ENCODE measurements at regions of chr13 and their contacts with region 1.

Region 1: DNA sequence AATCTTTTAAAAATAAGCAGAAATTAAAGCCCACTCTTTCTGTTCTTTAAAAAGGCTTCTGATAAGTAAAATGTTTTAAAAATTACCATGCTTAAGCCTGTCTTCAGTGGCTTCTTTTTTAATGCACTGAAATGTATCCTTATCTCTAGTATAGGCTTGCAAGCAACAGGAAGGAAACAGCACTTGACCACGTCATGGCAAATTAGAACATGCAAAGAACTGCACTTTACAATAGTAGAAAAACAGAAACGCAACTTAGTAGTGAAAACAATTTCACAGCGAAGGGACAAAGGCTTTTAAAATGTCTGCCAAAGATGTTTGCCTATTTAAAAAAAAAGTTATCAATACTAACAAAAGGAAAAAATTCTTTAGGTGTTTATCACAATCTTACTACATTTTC is 36.3 kb downstream of the ELF1 start:
- DNase-seq: peak in 7 of 9 experiments; percentile 35 to 92 (median 59)
- ATAC-seq: peak; percentile 61
- H3K4me3 ChIP-seq: peak overlapping the region; percentile 36 to 52
- H3K4me3 Mint-ChIP-seq: peak overlapping the region; percentile 95
- H3K27ac ChIP-seq: peak overlapping the region; percentile 76 to 89
- H3K27ac Mint-ChIP-seq: peak overlapping the region; percentile 92
- H3K4me1 ChIP-seq: peaks cover 45% of the 10 kb centered on the region
- H3K4me1 Mint-ChIP-seq: peaks cover 61% of the 10 kb centered on the region
- H3K27me3 ChIP-seq: no peaks in the 10 kb centered on the region
- H3K27me3 Mint-ChIP-seq: no peaks in the 10 kb centered on the region
- CTCF ChIP-seq: no peak

Region 2: GRCh38 chr13:39976481-39976880 is 1006.3 kb before region 1 on chr13:
- CTCF ChIA-PET with region 1: no interaction called
- POLR2A ChIA-PET with region 1: no interaction called
- intact Hi-C with region 1: no loop called
- DNase-seq: no peak
- ATAC-seq: no peak
- H3K4me3 ChIP-seq: no peak overlapping the region
- H3K4me3 Mint-ChIP-seq: no peak overlapping the region
- H3K27ac ChIP-seq: no peak overlapping the region
- H3K27ac Mint-ChIP-seq: no peak overlapping the region
- H3K4me1 ChIP-seq: no peaks in the 10 kb centered on the region
- H3K4me1 Mint-ChIP-seq: no peaks in the 10 kb centered on the region
- H3K27me3 ChIP-seq: no peaks in the 10 kb centered on the region
- H3K27me3 Mint-ChIP-seq: no peaks in the 10 kb centered on the region
- CTCF ChIP-seq: no peak

Region 3: DNA sequence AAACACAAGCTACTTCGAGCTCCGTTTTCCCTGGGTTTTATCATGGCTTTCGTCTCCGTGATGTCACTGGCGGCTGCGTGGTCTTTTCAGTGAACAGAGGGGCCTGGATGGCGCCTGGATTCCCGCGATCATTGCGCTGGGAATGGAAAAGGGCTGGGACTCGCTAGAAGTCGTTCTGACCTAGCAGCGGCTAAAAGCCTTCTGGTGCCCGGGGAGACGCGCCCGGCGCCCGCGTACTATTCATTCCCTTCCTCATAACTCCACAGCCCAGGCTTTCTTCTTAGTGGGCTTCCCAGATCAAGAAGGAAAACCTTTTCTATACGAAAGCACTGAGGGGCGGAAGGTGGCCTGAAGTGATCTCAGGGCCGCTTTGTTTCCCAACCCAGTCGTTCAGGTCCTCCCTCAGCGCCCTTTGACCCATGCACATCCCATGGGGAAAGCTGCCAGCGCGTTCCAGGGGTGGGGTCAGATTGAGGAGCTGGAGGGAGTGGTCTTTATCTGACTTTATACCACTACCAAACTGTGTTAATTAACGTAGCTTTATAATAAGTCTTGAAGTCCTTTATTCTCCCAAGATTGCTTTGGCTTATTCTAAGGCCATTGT is 60.2 kb before region 1 on chr13:
- CTCF ChIA-PET with region 1: no interaction called
- POLR2A ChIA-PET with region 1: interaction called, 4 read pairs
- intact Hi-C with region 1: loop called (anchors 2 to 5 kb)
- DNase-seq: peak in 2 of 9 experiments; percentile 17 to 30
- ATAC-seq: no peak
- H3K4me3 ChIP-seq: no peak overlapping the region
- H3K4me3 Mint-ChIP-seq: peak overlapping the region; percentile 59
- H3K27ac ChIP-seq: no peak overlapping the region
- H3K27ac Mint-ChIP-seq: peak overlapping the region; percentile 82
- H3K4me1 ChIP-seq: peaks cover 8% of the 10 kb centered on the region
- H3K4me1 Mint-ChIP-seq: peaks cover 27% of the 10 kb centered on the region
- H3K27me3 ChIP-seq: no peaks in the 10 kb centered on the region
- H3K27me3 Mint-ChIP-seq: no peaks in the 10 kb centered on the region
- CTCF ChIP-seq: no peak

Region 4: DNA sequence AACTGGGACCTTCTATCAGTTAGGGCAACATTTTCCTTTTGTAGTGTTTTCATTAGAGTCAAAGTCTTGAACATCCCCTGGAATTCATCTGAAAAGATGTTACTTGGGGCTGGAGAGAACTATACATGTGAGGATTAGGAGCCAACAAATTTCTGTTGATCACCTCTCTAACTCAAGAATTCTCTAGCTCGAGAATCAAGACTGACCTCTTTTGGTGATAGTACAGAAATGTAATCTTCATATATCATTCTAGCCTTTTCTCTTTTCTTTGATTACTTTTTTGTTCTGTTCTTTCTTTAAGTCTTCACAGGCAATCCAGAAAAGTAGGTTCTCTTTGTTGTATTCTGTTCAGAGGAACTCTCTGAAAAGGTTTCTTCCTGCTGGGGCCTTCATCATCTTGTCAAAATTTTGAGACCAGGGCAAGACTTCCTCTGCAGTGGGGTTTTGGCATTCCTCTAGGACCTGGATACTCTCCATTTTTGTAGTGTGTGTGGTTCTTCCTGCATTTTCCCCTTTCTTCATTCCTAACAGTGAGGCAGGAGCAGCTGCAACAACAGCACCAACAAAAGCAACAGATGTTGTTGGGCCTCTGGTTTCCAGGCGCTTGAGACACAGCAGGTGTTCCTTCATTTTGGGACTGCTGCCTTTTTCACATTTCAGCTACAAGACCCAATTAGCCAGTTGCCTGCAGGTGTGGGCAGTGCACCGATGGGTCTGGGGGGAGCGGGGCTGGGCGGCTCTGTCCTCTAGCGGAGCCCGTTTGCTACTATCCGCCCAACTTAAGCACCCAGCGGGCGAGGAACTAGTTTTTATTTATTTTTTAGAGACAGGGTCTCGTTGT is 10.1 kb after region 1 on chr13:
- CTCF ChIA-PET with region 1: interaction called, 4 read pairs
- POLR2A ChIA-PET with region 1: interaction called, 5 read pairs
- intact Hi-C with region 1: loop called in 1 of 2 experiments (anchors 1 kb)
- DNase-seq: peak in 2 of 9 experiments; percentile 47 to 66
- ATAC-seq: peak; percentile 52
- H3K4me3 ChIP-seq: no peak overlapping the region
- H3K4me3 Mint-ChIP-seq: peak overlapping the region; percentile 43
- H3K27ac ChIP-seq: peak overlapping the region in 1 of 2 experiments; percentile 17
- H3K27ac Mint-ChIP-seq: peak overlapping the region; percentile 86
- H3K4me1 ChIP-seq: peaks cover 88% of the 10 kb centered on the region
- H3K4me1 Mint-ChIP-seq: peaks cover 83% of the 10 kb centered on the region
- H3K27me3 ChIP-seq: no peaks in the 10 kb centered on the region
- H3K27me3 Mint-ChIP-seq: no peaks in the 10 kb centered on the region
- CTCF ChIP-seq: peak; percentile 47

Region 5: DNA sequence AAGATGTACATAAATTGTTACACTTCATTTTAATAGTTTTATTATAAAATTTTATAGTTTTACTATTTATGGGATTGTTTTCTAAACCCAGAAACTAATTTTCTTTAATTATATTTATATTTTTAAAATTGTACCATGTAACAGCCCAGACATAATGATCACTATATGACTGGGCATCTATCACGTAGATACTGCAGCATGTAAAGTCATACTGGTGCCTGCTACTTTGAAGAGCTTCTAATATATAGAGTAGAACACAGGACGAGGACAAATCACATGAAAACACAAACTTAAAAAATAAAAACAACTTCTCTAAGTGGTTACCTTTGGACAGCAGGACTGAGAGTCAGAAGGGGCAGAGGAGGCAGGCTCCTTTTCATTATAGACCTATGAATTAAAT is 31.1 kb after region 1 on chr13:
- CTCF ChIA-PET with region 1: interaction called, 4 read pairs
- POLR2A ChIA-PET with region 1: interaction called, 16 read pairs
- intact Hi-C with region 1: loop called in 1 of 2 experiments (anchors 1 kb)
- DNase-seq: no peak
- ATAC-seq: no peak
- H3K4me3 ChIP-seq: peak overlapping the region in 1 of 2 experiments; percentile 24
- H3K4me3 Mint-ChIP-seq: peak overlapping the region; percentile 88
- H3K27ac ChIP-seq: peak overlapping the region in 1 of 2 experiments; percentile 58
- H3K27ac Mint-ChIP-seq: peak overlapping the region; percentile 94
- H3K4me1 ChIP-seq: peaks cover 51% of the 10 kb centered on the region
- H3K4me1 Mint-ChIP-seq: peaks cover 64% of the 10 kb centered on the region
- H3K27me3 ChIP-seq: no peaks in the 10 kb centered on the region
- H3K27me3 Mint-ChIP-seq: no peaks in the 10 kb centered on the region
- CTCF ChIP-seq: no peak

Region 6: DNA sequence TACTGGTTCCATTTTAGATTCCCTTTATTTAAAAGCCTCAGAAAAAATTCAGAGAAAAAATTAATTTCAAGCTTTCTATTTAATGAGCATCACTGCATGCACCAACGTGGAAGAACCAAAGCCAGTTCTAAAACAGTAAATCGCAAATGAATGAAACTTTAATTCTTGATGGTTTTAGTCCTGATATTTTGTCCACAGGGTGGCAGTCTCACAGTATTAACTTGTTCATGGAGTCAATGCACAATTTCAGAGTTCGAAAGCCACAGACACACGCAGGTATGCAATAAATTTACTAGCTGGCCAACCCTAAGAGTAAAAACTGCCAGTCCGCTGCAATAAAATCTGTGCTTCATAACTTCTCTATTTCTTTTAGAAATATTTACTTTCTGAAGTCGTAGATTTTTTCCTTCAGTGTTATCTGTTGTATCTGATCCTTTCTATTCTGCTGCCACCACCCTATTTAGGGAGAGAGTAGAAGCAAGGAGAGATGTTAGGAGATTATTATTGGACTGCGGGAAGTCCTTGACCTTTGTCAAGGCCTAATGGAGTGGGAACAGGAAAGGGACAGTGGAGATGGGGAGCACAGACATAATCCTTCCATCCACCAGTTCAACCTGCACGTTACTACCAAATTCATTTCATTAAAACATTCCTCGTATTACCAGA is 71.6 kb after region 1 on chr13:
- CTCF ChIA-PET with region 1: interaction called, 16 read pairs
- POLR2A ChIA-PET with region 1: interaction called, 13 read pairs
- intact Hi-C with region 1: loop called in 1 of 2 experiments (anchors 2 kb)
- DNase-seq: peak in 5 of 9 experiments; percentile 30 to 79 (median 57)
- ATAC-seq: peak; percentile 78
- H3K4me3 ChIP-seq: no peak overlapping the region
- H3K4me3 Mint-ChIP-seq: no peak overlapping the region
- H3K27ac ChIP-seq: no peak overlapping the region
- H3K27ac Mint-ChIP-seq: peak overlapping the region; percentile 4
- H3K4me1 ChIP-seq: peaks cover 15% of the 10 kb centered on the region
- H3K4me1 Mint-ChIP-seq: peaks cover 51% of the 10 kb centered on the region
- H3K27me3 ChIP-seq: no peaks in the 10 kb centered on the region
- H3K27me3 Mint-ChIP-seq: no peaks in the 10 kb centered on the region
- CTCF ChIP-seq: peak; percentile 66

Region 7: GRCh38 chr13:41099986-41100385 is 117.2 kb after region 1 on chr13:
- CTCF ChIA-PET with region 1: no interaction called
- POLR2A ChIA-PET with region 1: no interaction called
- intact Hi-C with region 1: no loop called
- DNase-seq: no peak
- ATAC-seq: no peak
- H3K4me3 ChIP-seq: no peak overlapping the region
- H3K4me3 Mint-ChIP-seq: no peak overlapping the region
- H3K27ac ChIP-seq: no peak overlapping the region
- H3K27ac Mint-ChIP-seq: no peak overlapping the region
- H3K4me1 ChIP-seq: no peaks in the 10 kb centered on the region
- H3K4me1 Mint-ChIP-seq: peaks cover 2% of the 10 kb centered on the region
- H3K27me3 ChIP-seq: no peaks in the 10 kb centered on the region
- H3K27me3 Mint-ChIP-seq: no peaks in the 10 kb centered on the region
- CTCF ChIP-seq: no peak

Region 8: GRCh38 chr13:41179593-41180250 is 196.9 kb after region 1 on chr13:
- CTCF ChIA-PET with region 1: no interaction called
- POLR2A ChIA-PET with region 1: no interaction called
- intact Hi-C with region 1: no loop called
- DNase-seq: no peak
- ATAC-seq: no peak
- H3K4me3 ChIP-seq: no peak overlapping the region
- H3K4me3 Mint-ChIP-seq: no peak overlapping the region
- H3K27ac ChIP-seq: no peak overlapping the region
- H3K27ac Mint-ChIP-seq: no peak overlapping the region
- H3K4me1 ChIP-seq: no peaks in the 10 kb centered on the region
- H3K4me1 Mint-ChIP-seq: no peaks in the 10 kb centered on the region
- H3K27me3 ChIP-seq: no peaks in the 10 kb centered on the region
- H3K27me3 Mint-ChIP-seq: no peaks in the 10 kb centered on the region
- CTCF ChIP-seq: no peak

Region 9: DNA sequence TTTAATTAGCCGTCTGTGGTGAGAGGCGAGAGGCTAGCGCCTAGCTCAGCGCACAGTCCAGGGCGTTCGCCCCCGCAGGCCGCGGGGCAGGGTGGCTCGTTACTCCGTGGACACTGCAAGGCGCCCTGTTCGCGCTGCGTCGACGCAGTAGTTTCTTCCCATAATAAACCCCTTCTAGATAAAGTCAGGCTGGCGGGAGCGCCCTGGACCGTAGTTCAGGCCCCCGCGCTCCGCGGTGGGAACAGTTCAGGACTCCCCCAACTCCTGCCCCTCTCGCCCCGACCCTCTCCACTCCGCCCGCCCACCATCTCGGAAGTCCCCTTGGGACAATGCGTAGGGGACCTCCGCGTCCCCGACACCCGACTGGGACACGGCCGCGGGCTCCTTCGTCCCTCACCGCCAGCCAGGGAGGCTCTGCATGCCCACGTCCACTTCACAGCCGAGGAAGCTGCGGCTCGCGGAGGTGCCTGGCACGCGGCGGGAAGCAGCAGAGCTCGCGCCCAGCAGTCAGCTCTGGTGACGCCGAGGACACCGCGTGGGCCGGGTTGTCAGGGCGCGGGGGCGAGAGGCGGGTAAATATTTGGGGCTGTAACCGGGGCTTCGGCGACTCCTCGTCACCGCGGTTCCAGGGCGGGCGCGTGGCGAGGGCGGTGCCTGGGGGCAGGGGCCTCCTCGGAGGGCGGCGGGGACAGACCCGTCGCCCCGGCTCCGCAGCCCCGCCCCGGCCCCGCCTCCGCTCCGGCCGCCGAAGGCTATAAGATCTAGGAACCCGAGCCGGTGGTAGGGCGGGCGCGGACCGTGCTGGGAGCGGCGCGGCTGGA is 474.2 kb after region 1 on chr13 and contains the start of gene RGCC:
- CTCF ChIA-PET with region 1: no interaction called
- POLR2A ChIA-PET with region 1: no interaction called
- intact Hi-C with region 1: loop called in 1 of 2 experiments (anchors 10 kb)
- DNase-seq: peak; percentile 84 to 98 (median 94)
- ATAC-seq: peak; percentile 75
- H3K4me3 ChIP-seq: peak within 1 kb of the TSS; percentile 66 to 87
- H3K4me3 Mint-ChIP-seq: peak within 1 kb of the TSS; percentile 93
- H3K27ac ChIP-seq: peak within 1 kb of the TSS; percentile 85 to 93
- H3K27ac Mint-ChIP-seq: peak within 1 kb of the TSS; percentile 94
- H3K4me1 ChIP-seq: peaks cover 27% of the 10 kb centered on the region
- H3K4me1 Mint-ChIP-seq: peaks cover 40% of the 10 kb centered on the region
- H3K27me3 ChIP-seq: no peaks in the 10 kb centered on the region
- H3K27me3 Mint-ChIP-seq: no peaks in the 10 kb centered on the region
- CTCF ChIP-seq: no peak
- total RNA-seq, gene RGCC: 578 to 581 TPM

Region 10: GRCh38 chr13:42271337-42272114 is 1288.8 kb after region 1 on chr13:
- CTCF ChIA-PET with region 1: no interaction called
- POLR2A ChIA-PET with region 1: no interaction called
- intact Hi-C with region 1: loop called in 1 of 2 experiments (anchors 10 kb)
- DNase-seq: peak; percentile 83 to 99 (median 91)
- ATAC-seq: peak; percentile 86
- H3K4me3 ChIP-seq: peak overlapping the region; percentile 63 to 78
- H3K4me3 Mint-ChIP-seq: peak overlapping the region; percentile 97
- H3K27ac ChIP-seq: peak overlapping the region; percentile 89 to 94
- H3K27ac Mint-ChIP-seq: peak overlapping the region; percentile 96
- H3K4me1 ChIP-seq: peaks cover 31% of the 10 kb centered on the region
- H3K4me1 Mint-ChIP-seq: peaks cover 49% of the 10 kb centered on the region
- H3K27me3 ChIP-seq: no peaks in the 10 kb centered on the region
- H3K27me3 Mint-ChIP-seq: no peaks in the 10 kb centered on the region
- CTCF ChIP-seq: no peak

Region 11: DNA sequence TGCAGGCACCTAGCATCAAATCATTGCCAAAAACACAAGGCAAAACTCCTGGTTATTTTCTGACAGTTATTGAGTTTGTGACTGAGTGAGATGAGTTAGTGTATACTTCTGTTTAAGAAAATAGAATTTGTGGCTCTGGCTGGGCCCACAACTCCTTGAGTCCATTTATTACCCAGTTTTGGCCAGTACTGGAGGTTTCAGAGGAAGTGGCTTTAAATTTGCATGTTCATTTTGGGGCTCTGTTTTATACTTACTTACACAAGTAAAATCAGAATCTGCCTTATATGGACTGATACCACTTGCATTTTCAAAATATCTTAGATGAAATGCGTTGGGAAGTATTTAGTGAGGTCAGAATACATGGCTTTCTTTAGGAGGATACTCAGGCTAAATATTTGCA is 1620.1 kb after region 1 on chr13:
- CTCF ChIA-PET with region 1: no interaction called
- POLR2A ChIA-PET with region 1: no interaction called
- intact Hi-C with region 1: no loop called
- DNase-seq: no peak
- ATAC-seq: no peak
- H3K4me3 ChIP-seq: no peak overlapping the region
- H3K4me3 Mint-ChIP-seq: no peak overlapping the region
- H3K27ac ChIP-seq: no peak overlapping the region
- H3K27ac Mint-ChIP-seq: no peak overlapping the region
- H3K4me1 ChIP-seq: no peaks in the 10 kb centered on the region
- H3K4me1 Mint-ChIP-seq: no peaks in the 10 kb centered on the region
- H3K27me3 ChIP-seq: no peaks in the 10 kb centered on the region
- H3K27me3 Mint-ChIP-seq: peaks cover 4% of the 10 kb centered on the region
- CTCF ChIP-seq: no peak